ENCODE measurements at regions of chr5 and their contacts with region 1.

Region 1: DNA sequence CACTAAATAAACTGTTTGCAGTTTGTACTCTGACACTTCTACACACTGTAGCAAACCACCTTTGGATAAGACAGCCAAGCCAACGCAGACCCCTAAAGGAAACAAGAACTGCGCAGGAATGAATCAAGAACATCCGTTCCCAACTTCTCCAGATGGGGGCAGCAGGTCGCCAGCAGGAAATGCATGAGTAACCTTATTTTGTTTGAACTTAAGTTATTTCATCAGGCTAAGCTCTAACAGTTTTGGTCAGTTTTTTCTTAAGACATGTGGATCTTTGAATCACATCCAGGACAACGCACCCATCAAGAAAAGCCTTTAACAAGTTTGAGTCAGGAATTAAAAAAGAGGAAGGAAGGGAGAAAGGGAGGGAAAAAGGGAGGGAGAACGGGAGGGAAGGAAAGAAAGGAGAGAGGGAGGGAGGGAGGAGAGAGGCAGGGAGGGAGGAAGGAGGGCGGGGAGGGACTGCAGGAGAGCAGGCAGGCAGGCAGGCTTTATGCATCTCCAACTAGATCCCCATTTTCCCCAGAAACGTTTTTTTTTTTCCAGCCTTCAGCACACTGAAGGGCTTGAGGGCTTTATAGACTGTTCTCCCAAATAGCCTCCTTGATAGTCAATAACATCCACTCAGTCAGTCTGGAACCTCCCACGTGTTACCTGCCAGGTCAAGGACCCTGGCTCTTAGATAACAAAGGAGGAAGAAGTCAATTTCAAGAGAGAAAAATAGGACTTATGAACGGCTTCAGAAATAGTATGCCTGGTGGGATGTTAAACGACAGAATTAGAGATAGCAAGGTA is 22.2 kb downstream of the BHMT start:
- DNase-seq: peak; percentile 80
- ATAC-seq: peak; percentile 77
- H3K4me3 ChIP-seq: peak overlapping the region; percentile 53
- H3K27ac ChIP-seq: peak overlapping the region; percentile 34
- H3K4me1 ChIP-seq: peaks cover 11% of the 10 kb centered on the region
- H3K27me3 ChIP-seq: no peaks in the 10 kb centered on the region
- CTCF ChIP-seq: peak; percentile 73

Region 2: DNA sequence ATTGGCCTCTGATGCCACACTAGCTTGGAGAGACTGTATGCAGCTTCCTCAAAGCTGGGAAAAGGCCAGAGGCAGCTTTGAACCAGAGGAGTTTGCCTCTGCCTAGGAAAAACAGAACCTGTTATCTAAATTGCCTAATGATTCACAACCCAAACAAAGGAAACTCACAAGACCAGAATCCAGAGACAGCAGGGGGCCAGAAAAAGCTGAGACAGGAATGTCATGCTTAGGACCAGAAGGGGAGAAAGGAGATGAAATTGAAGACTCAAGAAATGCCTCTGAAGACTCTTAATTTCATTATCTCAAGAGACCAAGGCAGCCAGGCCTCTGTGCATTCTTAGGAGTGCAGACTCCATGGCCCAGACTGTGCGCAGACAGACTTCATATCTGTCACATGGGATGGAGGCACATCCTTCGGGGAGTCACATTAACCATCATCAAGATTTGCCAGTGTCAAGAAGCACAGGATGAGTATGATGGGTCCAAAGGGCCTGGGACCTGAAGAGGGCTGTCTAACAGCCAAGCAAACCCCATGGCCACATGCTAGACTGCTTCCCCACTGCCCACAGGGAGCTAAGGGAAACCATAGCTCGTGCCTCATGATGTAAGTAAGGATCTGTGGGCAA is 206.1 kb before region 1 on chr5:
- CTCF ChIA-PET with region 1: interaction called, 16 read pairs
- POLR2A ChIA-PET with region 1: no interaction called
- intact Hi-C with region 1: no loop called
- DNase-seq: peak; percentile 36
- ATAC-seq: peak; percentile 20; the same call in 1 of the 2 replicates
- H3K4me3 ChIP-seq: no peak overlapping the region
- H3K27ac ChIP-seq: no peak overlapping the region
- H3K4me1 ChIP-seq: peaks cover 6% of the 10 kb centered on the region; the same call in 1 of the 2 replicates
- H3K27me3 ChIP-seq: no peaks in the 10 kb centered on the region
- CTCF ChIP-seq: no peak

Region 3: DNA sequence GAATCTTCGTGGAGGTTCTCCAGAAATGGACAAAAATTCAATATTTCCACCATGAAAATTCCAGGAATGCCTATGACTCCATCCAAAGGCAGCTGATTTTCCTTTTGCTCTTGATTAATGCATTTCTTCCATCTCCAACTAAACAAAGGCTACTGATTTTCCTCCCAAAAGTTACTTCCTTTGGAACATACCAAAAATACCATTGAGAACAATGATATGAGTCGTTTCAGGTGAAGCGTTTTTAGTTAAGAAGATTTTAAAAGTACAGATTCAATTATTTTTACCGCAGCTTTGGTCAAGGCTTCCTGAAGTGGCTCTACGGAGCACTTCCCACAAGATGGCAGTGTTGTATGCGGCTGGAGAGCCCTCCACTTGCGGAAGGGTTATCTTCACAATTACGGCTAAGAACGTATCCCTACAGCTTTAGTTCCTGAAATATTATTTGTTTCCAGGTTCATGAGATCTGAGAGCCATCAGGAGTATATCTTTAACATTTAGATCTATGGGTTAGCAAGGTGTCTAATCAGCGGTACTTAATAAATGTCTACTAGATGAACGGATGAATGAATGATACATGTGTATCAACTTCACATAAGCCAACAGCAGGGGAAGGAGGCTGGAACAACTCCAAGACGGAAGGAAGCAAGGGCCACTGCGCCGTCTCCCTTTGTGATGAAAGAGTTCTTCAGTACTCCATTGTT is 112.8 kb before region 1 on chr5:
- CTCF ChIA-PET with region 1: interaction called, 176 read pairs
- POLR2A ChIA-PET with region 1: no interaction called
- intact Hi-C with region 1: loop called (anchors 1 kb)
- DNase-seq: peak; percentile 70
- ATAC-seq: peak; percentile 87
- H3K4me3 ChIP-seq: peak overlapping the region; percentile 51
- H3K27ac ChIP-seq: no peak overlapping the region
- H3K4me1 ChIP-seq: no peaks in the 10 kb centered on the region
- H3K27me3 ChIP-seq: no peaks in the 10 kb centered on the region
- CTCF ChIP-seq: peak; percentile 80

Region 4: DNA sequence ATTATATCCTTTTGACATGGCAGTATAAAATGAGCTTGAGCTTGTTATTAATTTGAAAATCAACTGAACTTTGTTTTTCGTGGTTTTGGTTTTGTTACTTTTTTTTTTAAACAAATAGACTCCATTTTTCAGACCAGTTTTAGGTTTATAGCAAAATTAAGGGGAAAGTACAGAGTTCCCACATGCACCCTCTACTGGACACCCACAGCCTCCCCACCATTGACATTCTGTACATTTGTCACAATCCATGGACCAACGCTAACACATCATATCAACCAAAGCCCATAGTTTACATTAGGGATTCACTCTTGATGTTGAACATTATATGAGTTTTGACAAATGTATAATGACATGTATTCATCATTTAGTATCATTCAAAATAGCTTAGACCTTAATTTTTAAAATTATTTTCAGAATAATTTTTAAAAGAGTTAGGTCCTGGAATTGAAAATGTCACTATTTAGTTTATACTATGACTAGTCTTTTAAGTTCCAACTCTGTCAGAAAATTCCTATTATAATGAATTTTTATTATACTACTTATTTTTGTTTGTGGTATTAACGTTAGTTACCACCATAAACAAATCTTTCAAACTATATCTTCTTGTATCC is 66.8 kb after region 1 on chr5:
- CTCF ChIA-PET with region 1: interaction called, 6 read pairs
- POLR2A ChIA-PET with region 1: no interaction called
- intact Hi-C with region 1: loop called (anchors 2 kb)
- DNase-seq: peak; percentile 52
- ATAC-seq: peak; percentile 68
- H3K4me3 ChIP-seq: no peak overlapping the region
- H3K27ac ChIP-seq: no peak overlapping the region
- H3K4me1 ChIP-seq: peaks cover 13% of the 10 kb centered on the region
- H3K27me3 ChIP-seq: no peaks in the 10 kb centered on the region
- CTCF ChIP-seq: peak; percentile 72

Region 5: GRCh38 chr5:79241535-79241979 is 107.7 kb after region 1 on chr5:
- CTCF ChIA-PET with region 1: interaction called, 14 read pairs
- POLR2A ChIA-PET with region 1: no interaction called
- intact Hi-C with region 1: no loop called
- DNase-seq: peak; percentile 63
- ATAC-seq: peak; percentile 65
- H3K4me3 ChIP-seq: peak overlapping the region; percentile 48
- H3K27ac ChIP-seq: peak overlapping the region; percentile 24; the same call in 1 of the 2 replicates
- H3K4me1 ChIP-seq: peaks cover 26% of the 10 kb centered on the region
- H3K27me3 ChIP-seq: no peaks in the 10 kb centered on the region
- CTCF ChIP-seq: no peak

Region 6: DNA sequence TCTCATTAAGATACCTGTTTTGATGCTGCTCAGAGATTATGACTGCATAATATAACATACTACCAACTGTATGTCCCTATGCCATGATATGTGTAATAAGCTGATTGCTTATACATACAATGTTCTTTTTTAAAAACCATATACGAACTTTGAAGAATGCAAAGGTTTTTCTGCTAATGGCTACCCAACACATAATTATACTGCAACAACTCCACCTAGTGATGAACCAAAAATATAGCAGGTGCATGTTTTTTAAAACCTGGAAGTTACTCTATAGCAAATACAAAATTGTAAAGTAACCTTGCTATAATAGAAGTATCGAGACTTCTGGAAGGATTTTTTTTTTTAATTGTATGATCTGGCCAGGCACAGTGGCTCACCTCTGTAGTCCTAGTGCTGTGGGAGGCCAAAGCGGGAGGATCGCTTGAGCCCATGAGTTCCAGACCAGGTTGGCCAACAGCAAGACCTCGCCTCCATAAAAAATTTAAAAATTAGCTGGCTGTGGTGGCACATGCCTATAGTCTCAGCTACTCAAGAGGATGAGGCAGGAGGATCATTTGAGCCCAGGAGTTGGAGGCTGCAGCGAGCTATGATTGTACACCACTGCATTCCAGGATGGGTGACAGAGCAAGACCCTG is 331.0 kb after region 1 on chr5:
- CTCF ChIA-PET with region 1: interaction called, 6 read pairs
- POLR2A ChIA-PET with region 1: no interaction called
- intact Hi-C with region 1: loop called (anchors 1 kb)
- DNase-seq: peak; percentile 52
- ATAC-seq: peak; percentile 55
- H3K4me3 ChIP-seq: peak overlapping the region; percentile 40; the same call in 1 of the 2 replicates
- H3K27ac ChIP-seq: no peak overlapping the region
- H3K4me1 ChIP-seq: no peaks in the 10 kb centered on the region
- H3K27me3 ChIP-seq: no peaks in the 10 kb centered on the region
- CTCF ChIP-seq: peak; percentile 80

Region 7: GRCh38 chr5:79535477-79536192 is 401.8 kb after region 1 on chr5:
- CTCF ChIA-PET with region 1: no interaction called
- POLR2A ChIA-PET with region 1: no interaction called
- intact Hi-C with region 1: loop called (anchors 5 kb)
- DNase-seq: peak; percentile 32
- ATAC-seq: peak; percentile 45
- H3K4me3 ChIP-seq: no peak overlapping the region
- H3K27ac ChIP-seq: no peak overlapping the region
- H3K4me1 ChIP-seq: no peaks in the 10 kb centered on the region
- H3K27me3 ChIP-seq: no peaks in the 10 kb centered on the region
- CTCF ChIP-seq: peak; percentile 41; the same call in 1 of the 2 replicates

Measured in PC-3 (cell line).